HCT116 (cell line): ENCODE measurements at regions of chr17 and their contacts with region 1.

Region 1: GRCh38 chr17:22644264-22644663 is 951.9 kb downstream of the KCNJ18 start:
- DNase-seq: no peak
- ATAC-seq: no peak
- H3K4me3 ChIP-seq: no peak overlapping the region
- H3K27ac ChIP-seq: no peak overlapping the region
- H3K4me1 ChIP-seq: no peaks in the 10 kb centered on the region
- H3K27me3 ChIP-seq: no peaks in the 10 kb centered on the region
- CTCF ChIP-seq: no peak
- POLR2A ChIP-seq: no peak
- RAD21 ChIP-seq: no peak

Region 2: DNA sequence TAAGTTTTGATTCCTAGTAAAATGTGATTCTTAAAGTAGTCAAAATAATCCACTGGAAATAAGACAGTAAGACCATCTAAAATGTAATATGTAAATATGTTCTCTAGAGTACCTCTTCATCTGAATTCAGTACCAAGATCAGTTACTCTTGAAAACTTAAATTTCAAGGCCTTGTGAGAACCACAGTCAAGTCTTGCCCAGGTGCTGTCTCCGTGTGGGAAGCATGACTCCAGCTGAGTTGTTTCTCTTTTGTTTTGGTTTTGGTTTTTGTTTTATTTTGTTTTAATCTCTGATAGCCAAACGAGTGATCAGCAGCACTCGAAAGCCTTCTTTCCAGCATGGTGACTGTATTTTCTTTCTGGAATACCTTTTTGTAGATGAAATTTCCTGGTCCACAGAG is 44.9 kb before region 1 on chr17:
- CTCF ChIA-PET with region 1: no interaction called
- POLR2A ChIA-PET with region 1: no interaction called
- RAD21 ChIA-PET with region 1: no interaction called
- intact Hi-C with region 1: loop called (anchors 10 kb)
- DNase-seq: no peak
- ATAC-seq: no peak
- H3K4me3 ChIP-seq: no peak overlapping the region
- H3K27ac ChIP-seq: no peak overlapping the region
- H3K4me1 ChIP-seq: no peaks in the 10 kb centered on the region
- H3K27me3 ChIP-seq: no peaks in the 10 kb centered on the region
- CTCF ChIP-seq: no peak
- POLR2A ChIP-seq: no peak
- RAD21 ChIP-seq: no peak

Region 3: GRCh38 chr17:22671110-22671509 is 26.8 kb after region 1 on chr17:
- CTCF ChIA-PET with region 1: no interaction called
- POLR2A ChIA-PET with region 1: no interaction called
- RAD21 ChIA-PET with region 1: no interaction called
- intact Hi-C with region 1: no loop called
- DNase-seq: no peak
- ATAC-seq: no peak
- H3K4me3 ChIP-seq: no peak overlapping the region
- H3K27ac ChIP-seq: no peak overlapping the region
- H3K4me1 ChIP-seq: no peaks in the 10 kb centered on the region
- H3K27me3 ChIP-seq: no peaks in the 10 kb centered on the region
- CTCF ChIP-seq: no peak
- POLR2A ChIP-seq: no peak
- RAD21 ChIP-seq: no peak

Region 4: GRCh38 chr17:22694362-22695227 is 50.3 kb after region 1 on chr17:
- CTCF ChIA-PET with region 1: no interaction called
- POLR2A ChIA-PET with region 1: no interaction called
- RAD21 ChIA-PET with region 1: no interaction called
- intact Hi-C with region 1: no loop called
- DNase-seq: no peak
- ATAC-seq: no peak
- H3K4me3 ChIP-seq: no peak overlapping the region
- H3K27ac ChIP-seq: no peak overlapping the region
- H3K4me1 ChIP-seq: no peaks in the 10 kb centered on the region
- H3K27me3 ChIP-seq: no peaks in the 10 kb centered on the region
- CTCF ChIP-seq: peak in 2 of 3 experiments; percentile 42 to 45; a peak in 3 of 6 replicates
- POLR2A ChIP-seq: no peak
- RAD21 ChIP-seq: no peak

Region 5: GRCh38 chr17:22707626-22708025 is 63.4 kb after region 1 on chr17:
- CTCF ChIA-PET with region 1: no interaction called
- POLR2A ChIA-PET with region 1: no interaction called
- RAD21 ChIA-PET with region 1: no interaction called
- intact Hi-C with region 1: no loop called
- DNase-seq: no peak
- ATAC-seq: no peak
- H3K4me3 ChIP-seq: no peak overlapping the region
- H3K27ac ChIP-seq: no peak overlapping the region
- H3K4me1 ChIP-seq: no peaks in the 10 kb centered on the region
- H3K27me3 ChIP-seq: no peaks in the 10 kb centered on the region
- CTCF ChIP-seq: no peak
- POLR2A ChIP-seq: no peak
- RAD21 ChIP-seq: no peak